ENCODE measurements at regions of chr19 and their contacts with region 1.

Region 1: GRCh38 chr19:17555480-17555928 is at the start of gene COLGALT1:
- DNase-seq: peak; percentile 92 to 99 (median 96)
- ATAC-seq: peak; percentile 99
- H3K4me3 ChIP-seq: peak within 1 kb of the TSS; percentile 81
- H3K4me3 Mint-ChIP-seq: peak within 1 kb of the TSS; percentile 73 to 90 (median 84)
- H3K27ac ChIP-seq: peak within 1 kb of the TSS; percentile 76
- H3K27ac Mint-ChIP-seq: peak within 1 kb of the TSS in 6 of 9 donors; percentile 36 to 80 (median 66)
- H3K4me1 ChIP-seq: peaks cover 16% of the 10 kb centered on the region in 2 donors
- H3K4me1 Mint-ChIP-seq: peaks cover 8 to 29% (median 20%) of the 10 kb centered on the region in 7 donors
- H3K27me3 ChIP-seq: no peaks in the 10 kb centered on the region
- H3K27me3 Mint-ChIP-seq: no peaks in the 10 kb centered on the region
- total RNA-seq, gene COLGALT1: 50.1 to 70.6 (median 61.3) TPM

Region 2: GRCh38 chr19:17496337-17496997 is 59.0 kb before region 1 on chr19:
- CTCF ChIA-PET with region 1: interaction called, 3 read pairs
- POLR2A ChIA-PET with region 1: interaction called, 3 read pairs
- intact Hi-C with region 1: loop called in 1 of 2 experiments (anchors 5 kb)
- DNase-seq: peak; percentile 61 to 82 (median 71)
- ATAC-seq: peak; percentile 100
- H3K4me3 ChIP-seq: peak overlapping the region; percentile 16
- H3K4me3 Mint-ChIP-seq: peak overlapping the region in 4 of 10 donors; percentile 11 to 46 (median 23)
- H3K27ac ChIP-seq: no peak overlapping the region
- H3K27ac Mint-ChIP-seq: peak overlapping the region in 4 of 9 donors; percentile 26 to 72 (median 50)
- H3K4me1 ChIP-seq: peaks cover 8 to 15% of the 10 kb centered on the region in 2 donors
- H3K4me1 Mint-ChIP-seq: peaks cover 13 to 30% (median 27%) of the 10 kb centered on the region in 7 donors
- H3K27me3 ChIP-seq: no peaks in the 10 kb centered on the region
- H3K27me3 Mint-ChIP-seq: no peaks in the 10 kb centered on the region

Region 3: GRCh38 chr19:17539238-17540117 is 16.0 kb before region 1 on chr19:
- CTCF ChIA-PET with region 1: interaction called, 3 read pairs
- POLR2A ChIA-PET with region 1: interaction called, 3 read pairs
- intact Hi-C with region 1: loop called (anchors 1 kb)
- DNase-seq: peak; percentile 87 to 99 (median 94)
- ATAC-seq: peak; percentile 100
- H3K4me3 ChIP-seq: peak overlapping the region; percentile 68
- H3K4me3 Mint-ChIP-seq: peak overlapping the region; percentile 84 to 90 (median 86)
- H3K27ac ChIP-seq: peak overlapping the region; percentile 67
- H3K27ac Mint-ChIP-seq: peak overlapping the region; percentile 16 to 81 (median 62)
- H3K4me1 ChIP-seq: peaks cover 9 to 10% of the 10 kb centered on the region in 2 donors
- H3K4me1 Mint-ChIP-seq: peaks cover 7 to 23% (median 16%) of the 10 kb centered on the region in 7 donors
- H3K27me3 ChIP-seq: no peaks in the 10 kb centered on the region
- H3K27me3 Mint-ChIP-seq: peaks cover 0 to 34% (median 0%) of the 10 kb centered on the region in 5 donors

Region 4: GRCh38 chr19:17718947-17719711 is 163.6 kb after region 1 on chr19 and contains the start of gene MAP1S:
- CTCF ChIA-PET with region 1: no interaction called
- POLR2A ChIA-PET with region 1: no interaction called
- intact Hi-C with region 1: loop called in 1 of 2 experiments (anchors 1 kb)
- DNase-seq: peak; percentile 26 to 82 (median 51)
- ATAC-seq: peak; percentile 85
- H3K4me3 ChIP-seq: peak within 1 kb of the TSS; percentile 71
- H3K4me3 Mint-ChIP-seq: peak within 1 kb of the TSS; percentile 85 to 93 (median 90)
- H3K27ac ChIP-seq: peak within 1 kb of the TSS; percentile 76
- H3K27ac Mint-ChIP-seq: peak within 1 kb of the TSS; percentile 75 to 96 (median 88)
- H3K4me1 ChIP-seq: peaks cover 19 to 24% of the 10 kb centered on the region in 2 donors
- H3K4me1 Mint-ChIP-seq: peaks cover 33 to 39% (median 36%) of the 10 kb centered on the region in 7 donors
- H3K27me3 ChIP-seq: no peaks in the 10 kb centered on the region
- H3K27me3 Mint-ChIP-seq: peaks cover 0 to 2% (median 0%) of the 10 kb centered on the region in 5 donors
- total RNA-seq, gene MAP1S: 28.6 to 73.8 (median 52.5) TPM

Region 5: DNA sequence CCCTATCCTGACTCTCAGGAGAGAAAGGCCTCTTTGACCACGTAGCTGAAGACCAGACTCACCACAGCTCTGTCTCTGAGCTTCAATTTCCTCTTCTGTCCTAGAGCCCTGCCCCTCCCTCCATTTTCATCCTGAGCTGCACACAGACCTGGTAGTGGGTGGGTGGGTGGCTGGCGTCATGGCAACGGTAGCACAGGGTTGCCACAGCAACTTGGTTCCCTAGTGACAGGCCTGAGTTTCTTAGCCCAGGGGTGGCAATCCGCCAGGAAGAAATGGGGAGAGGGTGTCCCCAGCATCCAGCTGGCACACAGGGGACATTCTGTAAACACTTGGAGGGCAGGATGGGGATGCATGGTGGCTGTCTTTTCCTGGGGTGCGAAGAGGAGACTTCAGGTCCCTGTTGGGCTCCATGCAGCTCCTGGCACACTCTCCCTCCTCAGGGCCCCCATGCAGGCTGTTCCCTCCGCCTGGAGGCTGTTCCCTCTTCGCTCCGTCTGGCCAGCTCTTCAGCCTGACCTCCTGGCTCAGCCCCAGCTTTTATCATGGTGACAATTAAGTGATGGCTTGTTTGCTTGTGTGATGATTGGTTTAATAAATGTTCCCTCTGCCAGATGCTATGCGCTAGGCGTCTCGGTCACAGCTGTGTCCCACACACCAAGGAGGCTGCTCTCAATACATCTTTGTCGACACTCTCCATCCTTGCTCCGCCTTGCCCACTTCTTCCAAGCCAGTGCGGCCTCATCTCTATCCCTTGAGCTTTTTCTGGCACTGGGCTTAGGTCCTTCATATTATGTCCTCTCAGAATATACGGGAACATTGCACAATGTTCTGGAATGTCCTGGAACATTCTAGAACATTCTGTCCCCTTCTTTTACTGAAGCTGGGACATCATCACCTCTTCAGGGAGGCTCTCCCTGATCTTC is 1073.9 kb after region 1 on chr19:
- CTCF ChIA-PET with region 1: no interaction called
- POLR2A ChIA-PET with region 1: no interaction called
- intact Hi-C with region 1: no loop called
- DNase-seq: no peak
- ATAC-seq: no peak
- H3K4me3 ChIP-seq: no peak overlapping the region
- H3K4me3 Mint-ChIP-seq: no peak overlapping the region
- H3K27ac ChIP-seq: no peak overlapping the region
- H3K27ac Mint-ChIP-seq: peak overlapping the region in 1 of 9 donors; percentile 15
- H3K4me1 ChIP-seq: no peaks in the 10 kb centered on the region
- H3K4me1 Mint-ChIP-seq: peaks cover 0 to under 1% (median 0%) of the 10 kb centered on the region in 7 donors
- H3K27me3 ChIP-seq: no peaks in the 10 kb centered on the region
- H3K27me3 Mint-ChIP-seq: peaks cover 0 to 9% (median 3%) of the 10 kb centered on the region in 5 donors